ENCODE measurements at regions of chr6 and their contacts with region 1.

Region 1: GRCh38 chr6:166775180-166776081 is 148.4 kb upstream of the RPS6KA2 start:
- DNase-seq: peak; percentile 85
- CTCF ChIP-seq: peak; percentile 90

Region 2: DNA sequence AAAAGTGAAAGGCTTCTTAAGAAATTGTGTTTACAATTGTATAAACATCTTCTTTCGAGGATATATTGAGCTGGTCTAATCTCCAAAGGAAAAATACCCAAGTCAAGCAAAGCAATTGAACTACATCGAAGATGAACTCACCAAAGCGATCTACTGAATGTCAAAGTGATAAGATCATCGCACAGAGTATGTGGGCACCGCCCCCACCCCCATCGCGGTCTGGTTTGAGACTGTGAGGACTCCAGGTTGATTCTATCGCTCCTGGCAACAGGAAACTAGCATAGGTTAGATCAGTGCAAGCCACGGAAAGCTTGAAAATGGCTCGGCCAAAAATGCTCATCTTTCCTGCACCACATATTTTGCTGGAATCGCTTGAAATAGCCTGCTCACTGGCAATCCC is 15.1 kb before region 1 on chr6:
- CTCF ChIA-PET with region 1: interaction called, 29 read pairs
- POLR2A ChIA-PET with region 1: no interaction called
- DNase-seq: no peak
- CTCF ChIP-seq: no peak

Region 3: GRCh38 chr6:166786704-166787293 is 11.4 kb after region 1 on chr6:
- CTCF ChIA-PET with region 1: interaction called, 13 read pairs
- POLR2A ChIA-PET with region 1: no interaction called
- DNase-seq: peak; percentile 72
- CTCF ChIP-seq: peak; percentile 53

Region 4: DNA sequence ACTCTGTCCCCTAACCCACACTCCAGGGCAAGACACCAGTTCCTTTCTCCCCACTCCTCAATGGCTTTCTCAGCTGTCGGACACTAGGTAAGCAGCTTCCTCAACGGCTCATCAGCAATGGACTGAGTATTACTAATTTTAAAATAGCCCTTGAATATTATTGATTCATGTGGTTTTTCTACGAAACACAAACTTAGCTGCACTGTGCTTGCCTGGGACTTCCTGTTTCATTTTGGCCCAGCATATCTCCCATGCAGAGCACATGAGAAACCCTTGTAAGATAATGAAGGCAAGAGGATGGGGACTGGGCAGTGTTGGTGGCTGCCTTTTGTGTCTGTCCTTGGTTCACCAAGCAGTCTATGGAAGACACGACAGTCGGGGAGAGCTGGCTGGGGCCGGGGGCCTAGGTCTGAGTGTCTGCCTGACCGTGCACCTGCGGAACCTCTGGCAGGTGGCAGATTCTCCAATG is 132.0 kb after region 1 on chr6:
- CTCF ChIA-PET with region 1: interaction called, 10 read pairs
- POLR2A ChIA-PET with region 1: no interaction called
- DNase-seq: peak; percentile 74
- CTCF ChIP-seq: no peak

Region 5: GRCh38 chr6:166950443-166950821 is 175.0 kb after region 1 on chr6:
- CTCF ChIA-PET with region 1: interaction called, 17 read pairs
- POLR2A ChIA-PET with region 1: no interaction called
- DNase-seq: peak; percentile 71
- CTCF ChIP-seq: no peak

Region 6: GRCh38 chr6:167153521-167153959 is 378.1 kb after region 1 on chr6:
- CTCF ChIA-PET with region 1: interaction called, 13 read pairs
- POLR2A ChIA-PET with region 1: no interaction called
- DNase-seq: peak; percentile 75
- CTCF ChIP-seq: no peak

Region 7: GRCh38 chr6:167291623-167292300 is 516.3 kb after region 1 on chr6:
- CTCF ChIA-PET with region 1: interaction called, 25 read pairs
- POLR2A ChIA-PET with region 1: no interaction called
- DNase-seq: no peak
- CTCF ChIP-seq: no peak

Region 8: GRCh38 chr6:168107212-168107983 is 1332.0 kb after region 1 on chr6:
- CTCF ChIA-PET with region 1: no interaction called
- POLR2A ChIA-PET with region 1: no interaction called
- DNase-seq: no peak
- CTCF ChIP-seq: no peak